ENCODE measurements at regions of chr1 and their contacts with region 1.

Region 1: DNA sequence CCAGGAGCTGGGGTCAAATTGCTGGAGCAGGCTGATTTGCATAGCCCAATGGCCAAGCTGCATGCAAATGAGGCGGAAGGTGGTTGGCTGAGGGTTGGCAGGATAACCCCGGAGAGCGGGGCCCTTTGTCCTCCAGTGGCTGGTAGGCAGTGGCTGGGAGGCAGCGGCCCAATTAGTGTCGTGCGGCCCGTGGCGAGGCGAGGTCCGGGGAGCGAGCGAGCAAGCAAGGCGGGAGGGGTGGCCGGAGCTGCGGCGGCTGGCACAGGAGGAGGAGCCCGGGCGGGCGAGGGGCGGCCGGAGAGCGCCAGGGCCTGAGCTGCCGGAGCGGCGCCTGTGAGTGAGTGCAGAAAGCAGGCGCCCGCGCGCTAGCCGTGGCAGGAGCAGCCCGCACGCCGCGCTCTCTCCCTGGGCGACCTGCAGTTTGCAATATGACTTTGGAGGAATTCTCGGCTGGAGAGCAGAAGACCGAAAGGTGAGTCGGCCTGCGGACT is at the start of gene GADD45A:
- DNase-seq: peak; percentile 98 to 99
- ATAC-seq: peak; percentile 93 to 96 (median 94)
- H3K4me3 ChIP-seq: peak within 1 kb of the TSS; percentile 59 to 97 (median 90)
- H3K27ac ChIP-seq: peak within 1 kb of the TSS; percentile 94 to 100 (median 98)
- H3K4me1 ChIP-seq: peaks cover 2 to 52% (median 35%) of the 10 kb centered on the region in 9 donors
- H3K27me3 ChIP-seq: no peaks in the 10 kb centered on the region
- CTCF ChIP-seq: peak in 1 of 9 donors; percentile 7
- total RNA-seq, gene GADD45A: 26.2 to 148 (median 72.7) TPM

Region 2: GRCh38 chr1:67561704-67562113 is 123.4 kb before region 1 on chr1:
- intact Hi-C with region 1: loop called in 8 of 10 experiments (anchors 1 to 10 kb)
- DNase-seq: peak; percentile 92 to 93
- ATAC-seq: peak; percentile 69 to 91 (median 78)
- H3K4me3 ChIP-seq: no peak overlapping the region
- H3K27ac ChIP-seq: peak overlapping the region in 9 of 10 donors; percentile 10 to 64 (median 54)
- H3K4me1 ChIP-seq: peaks cover 0 to 42% (median 29%) of the 10 kb centered on the region in 9 donors
- H3K27me3 ChIP-seq: no peaks in the 10 kb centered on the region
- CTCF ChIP-seq: peak; percentile 76 to 92 (median 88)

Region 3: GRCh38 chr1:67646145-67647035 is 38.7 kb before region 1 on chr1:
- intact Hi-C with region 1: loop called in 2 of 10 experiments (anchors 5 kb)
- DNase-seq: peak; percentile 47 to 61
- ATAC-seq: peak; percentile 32 to 74 (median 60)
- H3K4me3 ChIP-seq: no peak overlapping the region
- H3K27ac ChIP-seq: peak overlapping the region in 9 of 10 donors; percentile 8 to 75 (median 49)
- H3K4me1 ChIP-seq: peaks cover 8 to 40% (median 26%) of the 10 kb centered on the region in 9 donors
- H3K27me3 ChIP-seq: no peaks in the 10 kb centered on the region
- CTCF ChIP-seq: no peak

Region 4: GRCh38 chr1:67713057-67713846 is 28.1 kb after region 1 on chr1:
- intact Hi-C with region 1: no loop called
- DNase-seq: peak in 1 of 2 donors; percentile 35
- ATAC-seq: peak in 7 of 8 donors; percentile 20 to 73 (median 52)
- H3K4me3 ChIP-seq: no peak overlapping the region
- H3K27ac ChIP-seq: peak overlapping the region in 3 of 10 donors; percentile 9 to 59 (median 18)
- H3K4me1 ChIP-seq: peaks cover 18 to 71% (median 46%) of the 10 kb centered on the region in 9 donors
- H3K27me3 ChIP-seq: no peaks in the 10 kb centered on the region
- CTCF ChIP-seq: no peak

Region 5: DNA sequence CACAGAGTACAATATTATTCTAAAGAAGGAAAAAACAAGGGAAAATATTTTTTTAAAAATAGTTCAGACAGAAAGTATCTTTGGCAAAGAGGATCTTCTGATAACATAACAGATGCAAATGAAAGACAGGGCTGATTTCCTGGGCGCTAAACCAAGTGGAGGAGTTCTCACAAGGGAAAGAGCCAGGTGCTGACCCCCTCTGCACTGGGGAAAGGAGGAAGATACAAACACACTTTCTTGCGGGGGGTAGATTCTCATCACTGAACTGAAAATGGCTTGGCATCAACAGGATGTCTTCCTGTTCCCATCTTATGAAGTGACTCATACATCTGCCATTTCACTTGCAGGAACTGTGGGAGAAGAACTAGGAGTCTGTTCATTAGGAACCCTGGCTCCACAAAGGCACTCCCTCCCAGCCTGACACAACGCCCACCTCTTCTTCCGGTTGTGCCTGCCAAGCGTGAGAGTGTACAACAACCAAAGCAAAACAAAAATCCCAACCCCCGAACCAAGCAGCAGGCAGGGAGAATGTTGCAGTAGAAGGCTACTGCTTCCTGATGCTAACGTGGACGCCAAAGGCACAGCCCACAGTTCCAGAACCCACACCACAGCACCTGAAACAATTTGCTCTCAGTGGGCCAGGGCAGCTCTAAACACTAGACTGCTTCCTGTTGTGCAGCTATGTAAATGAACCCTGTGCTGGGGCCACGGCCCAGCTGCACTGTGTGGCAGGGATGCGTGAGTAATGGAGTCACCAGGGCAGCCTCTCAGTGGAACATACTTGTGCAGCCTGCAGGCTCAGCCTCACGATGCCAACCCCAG is 50.9 kb after region 1 on chr1:
- intact Hi-C with region 1: loop called in 1 of 10 experiments (anchors 5 kb)
- DNase-seq: peak; percentile 54 to 81
- ATAC-seq: peak; percentile 79 to 94 (median 86)
- H3K4me3 ChIP-seq: peak overlapping the region in 5 of 10 donors; percentile 8 to 34 (median 11)
- H3K27ac ChIP-seq: peak overlapping the region; percentile 49 to 84 (median 69)
- H3K4me1 ChIP-seq: peaks cover 15 to 67% (median 55%) of the 10 kb centered on the region in 9 donors
- H3K27me3 ChIP-seq: no peaks in the 10 kb centered on the region
- CTCF ChIP-seq: no peak

Region 6: DNA sequence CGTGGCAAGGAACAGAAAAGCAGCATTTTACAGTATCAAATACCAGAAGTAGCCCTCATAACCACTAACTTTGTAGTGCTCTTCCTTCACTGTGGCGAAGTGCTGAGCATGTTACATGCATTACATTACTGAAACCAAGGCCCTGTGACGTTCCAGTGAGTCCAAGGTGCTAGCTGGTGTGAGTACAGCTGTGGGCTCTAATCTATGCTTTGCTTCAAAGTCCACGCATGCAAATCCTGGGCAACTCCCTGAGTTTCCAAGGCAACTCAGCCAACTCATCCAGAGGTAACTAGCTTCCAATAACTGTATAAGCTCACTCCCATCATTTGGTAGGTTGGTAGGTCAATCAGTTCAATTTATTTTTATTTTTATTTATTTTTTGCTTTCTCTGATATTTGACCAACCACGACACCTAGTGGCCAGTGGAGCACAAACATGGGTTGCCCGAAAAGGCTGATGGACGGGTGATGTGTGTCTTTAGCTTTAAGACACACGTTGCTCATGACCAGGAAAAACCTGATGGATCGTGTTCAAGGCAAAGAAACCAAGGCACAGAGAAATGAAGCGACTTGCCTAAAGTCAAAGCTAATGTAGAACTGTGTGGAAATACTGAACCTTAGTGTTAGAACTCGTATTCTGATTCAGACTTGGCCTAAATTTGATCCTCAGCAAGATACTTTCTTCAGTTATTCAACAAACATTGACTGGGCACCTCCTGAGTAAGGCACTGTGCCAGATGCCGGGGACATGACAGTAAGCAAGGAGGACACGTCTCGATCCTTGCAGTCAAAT is 75.1 kb after region 1 on chr1:
- intact Hi-C with region 1: loop called in 9 of 10 experiments (anchors 2 to 5 kb)
- DNase-seq: peak; percentile 26 to 66
- ATAC-seq: peak; percentile 56 to 82 (median 72)
- H3K4me3 ChIP-seq: no peak overlapping the region
- H3K27ac ChIP-seq: peak overlapping the region in 4 of 10 donors; percentile 29 to 42 (median 35)
- H3K4me1 ChIP-seq: peaks cover 0 to 31% (median 16%) of the 10 kb centered on the region in 9 donors
- H3K27me3 ChIP-seq: no peaks in the 10 kb centered on the region
- CTCF ChIP-seq: peak; percentile 64 to 96 (median 89)

Region 7: GRCh38 chr1:67937651-67938050 is 252.5 kb after region 1 on chr1:
- intact Hi-C with region 1: no loop called
- DNase-seq: no peak
- ATAC-seq: peak in 6 of 8 donors; percentile 32 to 63 (median 45)
- H3K4me3 ChIP-seq: no peak overlapping the region
- H3K27ac ChIP-seq: peak overlapping the region in 2 of 10 donors; percentile 60 to 70
- H3K4me1 ChIP-seq: peaks cover 5 to 31% (median 14%) of the 10 kb centered on the region in 9 donors
- H3K27me3 ChIP-seq: no peaks in the 10 kb centered on the region
- CTCF ChIP-seq: no peak

Measured in heart right ventricle (tissue), 16 donors.